ENCODE measurements at regions of chr2 and their contacts with region 1.

Region 1: DNA sequence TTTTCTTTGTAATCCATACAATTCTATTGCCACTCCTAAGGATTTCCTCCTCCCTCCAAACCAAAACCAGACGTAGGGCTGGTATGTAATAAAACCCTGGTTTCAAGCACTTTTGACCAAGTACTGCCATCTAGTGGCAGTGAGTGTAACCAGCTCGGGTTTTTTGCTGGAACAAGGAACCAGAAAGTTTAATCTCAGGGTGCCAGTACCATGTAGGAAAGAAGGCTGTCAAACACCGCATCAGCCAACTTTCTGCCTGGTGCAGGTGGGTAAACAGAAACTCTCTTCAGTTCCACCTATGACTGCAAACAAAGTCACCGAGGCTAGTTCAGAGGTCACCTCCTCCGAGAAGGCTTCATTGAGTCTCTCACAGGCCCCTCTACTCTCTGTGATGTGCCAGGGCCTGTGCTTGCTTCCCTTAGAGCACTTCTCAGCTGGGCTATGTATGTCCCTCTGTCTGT is 10.2 kb upstream of the THNSL2 start:
- DNase-seq: no peak
- ATAC-seq: peak; percentile 85

Region 2: GRCh38 chr2:88059979-88060906 is 99.7 kb before region 1 on chr2:
- intact Hi-C with region 1: loop called (anchors 2 kb)
- DNase-seq: no peak
- ATAC-seq: peak; percentile 47

Region 3: DNA sequence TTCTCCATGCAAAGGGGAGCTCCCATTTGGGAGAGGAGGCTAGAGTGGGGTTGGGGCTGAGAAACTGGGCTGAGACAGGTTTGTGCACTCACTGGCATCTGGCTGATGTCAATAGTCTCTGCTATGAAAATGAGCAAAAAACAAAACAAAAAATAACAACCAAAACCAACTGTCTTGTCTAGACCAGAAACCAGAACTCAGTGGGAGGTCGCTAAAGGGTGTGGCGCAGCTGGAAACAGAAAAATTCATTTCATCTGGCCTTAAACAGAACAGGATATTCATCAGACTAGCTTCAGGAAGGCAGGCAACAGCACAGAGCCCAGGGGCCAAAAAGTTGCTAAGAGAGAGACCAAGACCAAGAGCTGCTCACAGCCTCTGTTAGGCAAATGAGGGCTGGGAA is 136.3 kb after region 1 on chr2:
- intact Hi-C with region 1: no loop called
- DNase-seq: no peak
- ATAC-seq: no peak

Measured in Right ventricle myocardium superior (tissue), 1 donor.